ENCODE measurements at regions of chr7 and their contacts with region 1.

Region 1: GRCh38 chr7:98168181-98168905 is 42.9 kb upstream of the BHLHA15 start:
- DNase-seq: peak; percentile 39 to 78
- H3K4me3 ChIP-seq: no peak overlapping the region
- H3K27ac ChIP-seq: no peak overlapping the region
- H3K4me1 ChIP-seq: no peaks in the 10 kb centered on the region; a peak in 1 of 7 replicates
- H3K27me3 ChIP-seq: no peaks in the 10 kb centered on the region
- CTCF ChIP-seq: peak; percentile 45 to 83 (median 68)
- EP300 ChIP-seq: no peak
- POLR2A ChIP-seq: no peak
- RAD21 ChIP-seq: peak; percentile 92 to 94

Region 2: DNA sequence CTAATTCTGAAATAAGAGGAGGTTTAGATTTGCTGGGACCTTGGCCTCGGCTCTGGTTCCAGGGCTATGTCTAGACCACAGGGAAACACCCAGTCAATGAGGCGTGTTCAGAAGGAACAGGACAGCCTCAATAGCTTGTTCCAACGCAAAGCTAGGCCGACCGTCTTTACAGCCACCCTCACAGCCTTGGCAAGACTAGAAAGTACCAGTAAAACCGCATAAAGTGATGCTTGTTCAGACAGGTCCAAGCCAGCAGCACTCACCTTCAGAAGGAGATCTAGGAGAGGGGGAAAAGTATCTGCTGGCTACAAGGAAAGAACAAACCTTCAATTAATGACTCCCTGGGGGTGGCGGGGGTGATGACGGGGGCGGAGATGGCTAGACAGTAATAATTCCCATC is 111.8 kb before region 1 on chr7:
- CTCF ChIA-PET with region 1: interaction called, 10 read pairs
- POLR2A ChIA-PET with region 1: no interaction called
- DNase-seq: no peak
- H3K4me3 ChIP-seq: no peak overlapping the region
- H3K27ac ChIP-seq: no peak overlapping the region
- H3K4me1 ChIP-seq: no peaks in the 10 kb centered on the region; a peak in 1 of 7 replicates
- H3K27me3 ChIP-seq: no peaks in the 10 kb centered on the region
- CTCF ChIP-seq: no peak
- EP300 ChIP-seq: no peak
- POLR2A ChIP-seq: no peak
- RAD21 ChIP-seq: no peak

Region 3: DNA sequence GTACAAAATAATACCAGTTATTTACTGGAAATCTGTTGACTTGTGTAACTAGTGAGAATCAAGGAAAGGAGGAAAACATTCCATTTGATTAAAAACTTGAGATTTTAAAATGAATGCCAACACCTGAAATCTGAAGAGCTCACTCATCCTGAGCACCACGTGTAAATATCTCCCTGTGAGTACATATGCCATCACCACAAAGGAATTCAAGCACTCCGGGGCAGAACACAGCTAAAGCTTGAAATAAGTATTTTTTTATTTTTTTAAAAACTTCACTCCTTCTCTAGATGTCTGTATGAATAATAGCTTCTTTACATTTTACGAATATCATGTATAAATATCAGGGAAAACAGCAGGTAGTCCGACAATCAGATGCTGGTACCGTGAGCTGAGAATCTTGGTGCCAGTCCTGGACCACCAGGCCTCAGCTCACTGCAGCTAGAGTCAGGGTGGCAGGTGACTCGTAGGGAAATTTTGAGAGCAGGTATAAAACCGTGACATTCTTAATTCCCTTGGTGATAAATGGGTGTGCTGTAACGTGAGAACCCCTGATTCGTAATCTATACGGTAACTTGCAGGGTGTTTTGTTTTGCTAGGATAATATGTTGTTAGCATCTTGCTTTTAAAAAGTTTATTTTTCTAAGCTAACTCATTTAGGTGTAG is 49.0 kb before region 1 on chr7:
- CTCF ChIA-PET with region 1: interaction called, 15 read pairs
- POLR2A ChIA-PET with region 1: no interaction called
- DNase-seq: no peak
- H3K4me3 ChIP-seq: no peak overlapping the region
- H3K27ac ChIP-seq: no peak overlapping the region
- H3K4me1 ChIP-seq: peaks cover 0 to 4% (median 3%) of the 10 kb centered on the region in 4 experiments; a peak in 3 of 7 replicates
- H3K27me3 ChIP-seq: no peaks in the 10 kb centered on the region
- CTCF ChIP-seq: no peak
- EP300 ChIP-seq: no peak
- POLR2A ChIP-seq: no peak
- RAD21 ChIP-seq: no peak

Region 4: DNA sequence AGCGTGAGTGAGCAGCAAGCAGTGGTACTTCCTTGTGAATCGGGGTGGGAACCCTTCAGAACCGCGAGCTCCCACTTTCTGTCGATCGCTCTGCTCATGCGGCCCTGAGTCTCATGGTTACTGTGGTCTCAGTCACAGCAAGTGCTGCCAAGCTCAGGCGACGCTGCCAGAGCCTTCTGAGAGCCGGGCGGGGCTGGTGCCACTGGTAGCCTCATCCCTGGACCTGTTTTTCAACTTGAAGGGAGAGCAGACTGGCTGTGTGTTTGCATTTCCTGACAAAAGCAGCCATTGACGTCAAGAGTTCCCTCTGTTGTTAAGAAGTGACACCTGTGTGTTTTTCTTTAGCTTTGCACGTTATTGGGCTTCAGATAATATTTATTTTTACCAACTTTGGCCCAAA is 10.0 kb after region 1 on chr7:
- CTCF ChIA-PET with region 1: interaction called, 75 read pairs
- POLR2A ChIA-PET with region 1: interaction called, 3 read pairs
- DNase-seq: no peak
- H3K4me3 ChIP-seq: no peak overlapping the region
- H3K27ac ChIP-seq: no peak overlapping the region
- H3K4me1 ChIP-seq: peaks cover 0 to 2% (median 0%) of the 10 kb centered on the region in 4 experiments; a peak in 4 of 7 replicates
- H3K27me3 ChIP-seq: no peaks in the 10 kb centered on the region
- CTCF ChIP-seq: no peak
- EP300 ChIP-seq: no peak
- POLR2A ChIP-seq: no peak
- RAD21 ChIP-seq: no peak

Region 5: DNA sequence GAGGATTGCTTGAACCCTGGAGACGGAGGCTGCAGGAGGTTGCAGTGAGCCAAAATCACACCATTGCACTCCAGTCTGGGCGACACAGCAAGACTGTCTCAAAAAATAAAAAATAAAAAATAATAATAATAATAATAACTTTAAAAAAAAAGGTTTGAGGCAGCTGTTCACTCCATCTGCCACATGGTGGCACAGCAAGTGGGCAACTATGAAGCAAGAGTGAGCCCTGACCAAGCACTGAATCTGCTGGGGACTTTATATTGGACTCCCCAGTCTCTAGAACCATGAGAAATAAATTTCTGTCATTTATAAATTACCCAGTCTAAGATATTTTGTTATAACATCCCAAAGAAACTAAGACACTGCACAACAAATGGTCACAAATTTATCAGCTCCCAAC is 98.5 kb after region 1 on chr7:
- CTCF ChIA-PET with region 1: no interaction called
- POLR2A ChIA-PET with region 1: no interaction called
- DNase-seq: no peak
- H3K4me3 ChIP-seq: no peak overlapping the region
- H3K27ac ChIP-seq: no peak overlapping the region
- H3K4me1 ChIP-seq: no peaks in the 10 kb centered on the region
- H3K27me3 ChIP-seq: no peaks in the 10 kb centered on the region
- CTCF ChIP-seq: peak; percentile 8 to 16 (median 11); a peak in 2 of 4 replicates
- EP300 ChIP-seq: no peak
- POLR2A ChIP-seq: no peak
- RAD21 ChIP-seq: peak; percentile 11 to 30; a peak in 1 of 4 replicates

Region 6: GRCh38 chr7:98329100-98329790 is 160.9 kb after region 1 on chr7:
- CTCF ChIA-PET with region 1: no interaction called
- POLR2A ChIA-PET with region 1: no interaction called
- DNase-seq: no peak
- H3K4me3 ChIP-seq: no peak overlapping the region
- H3K27ac ChIP-seq: no peak overlapping the region
- H3K4me1 ChIP-seq: peaks cover 0 to 3% (median 0%) of the 10 kb centered on the region in 4 experiments; a peak in 3 of 7 replicates
- H3K27me3 ChIP-seq: no peaks in the 10 kb centered on the region
- CTCF ChIP-seq: no peak
- EP300 ChIP-seq: no peak
- POLR2A ChIP-seq: no peak
- RAD21 ChIP-seq: no peak

Region 7: DNA sequence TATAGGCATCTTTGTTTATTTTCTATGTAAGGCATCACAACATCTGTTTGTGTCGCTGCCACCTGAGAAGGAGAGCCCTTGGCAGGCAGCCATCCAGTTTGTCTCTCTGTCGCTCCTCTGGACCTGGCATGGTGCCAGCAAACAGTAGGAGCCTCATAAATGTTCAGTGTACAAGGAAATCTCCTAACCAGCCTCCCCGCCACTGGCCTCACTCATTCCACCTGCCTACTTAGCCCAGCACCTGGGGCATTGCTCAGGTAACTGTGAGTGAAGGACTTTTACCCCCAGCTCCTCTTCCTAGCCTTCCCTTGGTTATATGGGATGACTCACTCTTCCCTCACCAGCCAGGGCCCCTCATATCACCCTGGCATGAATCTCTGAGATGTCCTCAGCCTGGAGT is 387.1 kb after region 1 on chr7:
- CTCF ChIA-PET with region 1: no interaction called
- POLR2A ChIA-PET with region 1: no interaction called
- DNase-seq: no peak
- H3K4me3 ChIP-seq: no peak overlapping the region
- H3K27ac ChIP-seq: no peak overlapping the region
- H3K4me1 ChIP-seq: no peaks in the 10 kb centered on the region
- H3K27me3 ChIP-seq: no peaks in the 10 kb centered on the region
- CTCF ChIP-seq: no peak
- EP300 ChIP-seq: no peak
- POLR2A ChIP-seq: no peak
- RAD21 ChIP-seq: no peak